HepG2 (cell line): ENCODE measurements at regions of chr1 and their contacts with region 1.

Region 1: GRCh38 chr1:116139592-116140134 is 28.5 kb downstream of the MAB21L3 start:
- DNase-seq: no peak
- ATAC-seq: no peak
- H3K4me3 ChIP-seq: no peak overlapping the region
- H3K27ac ChIP-seq: no peak overlapping the region
- H3K4me1 ChIP-seq: peaks cover 13% of the 10 kb centered on the region
- H3K27me3 ChIP-seq: no peaks in the 10 kb centered on the region
- CTCF ChIP-seq: no peak
- EP300 ChIP-seq: no peak
- POLR2A ChIP-seq: no peak
- RAD21 ChIP-seq: no peak

Region 2: GRCh38 chr1:116168277-116169097 is 28.8 kb after region 1 on chr1:
- CTCF ChIA-PET with region 1: no interaction called
- POLR2A ChIA-PET with region 1: no interaction called
- in situ Hi-C with region 1: no loop called
- intact Hi-C with region 1: no loop called
- DNase-seq: no peak
- ATAC-seq: no peak
- H3K4me3 ChIP-seq: no peak overlapping the region
- H3K27ac ChIP-seq: no peak overlapping the region
- H3K4me1 ChIP-seq: peaks cover 82% of the 10 kb centered on the region
- H3K27me3 ChIP-seq: no peaks in the 10 kb centered on the region
- CTCF ChIP-seq: no peak
- EP300 ChIP-seq: no peak
- POLR2A ChIP-seq: no peak
- RAD21 ChIP-seq: no peak

Region 3: GRCh38 chr1:116189481-116189880 is 49.8 kb after region 1 on chr1:
- CTCF ChIA-PET with region 1: no interaction called
- POLR2A ChIA-PET with region 1: no interaction called
- in situ Hi-C with region 1: no loop called
- intact Hi-C with region 1: no loop called
- DNase-seq: no peak
- ATAC-seq: no peak
- H3K4me3 ChIP-seq: no peak overlapping the region
- H3K27ac ChIP-seq: no peak overlapping the region
- H3K4me1 ChIP-seq: peaks cover 10% of the 10 kb centered on the region
- H3K27me3 ChIP-seq: no peaks in the 10 kb centered on the region
- CTCF ChIP-seq: no peak
- EP300 ChIP-seq: no peak
- POLR2A ChIP-seq: no peak
- RAD21 ChIP-seq: no peak

Region 4: GRCh38 chr1:116377541-116378529 is 238.2 kb after region 1 on chr1:
- CTCF ChIA-PET with region 1: interaction called, 6 read pairs
- POLR2A ChIA-PET with region 1: interaction called, 10 read pairs
- in situ Hi-C with region 1: no loop called
- intact Hi-C with region 1: no loop called
- DNase-seq: peak; percentile 79
- ATAC-seq: peak; percentile 21
- H3K4me3 ChIP-seq: peak overlapping the region; percentile 39 to 89 (median 84)
- H3K27ac ChIP-seq: peak overlapping the region; percentile 77
- H3K4me1 ChIP-seq: peaks cover 85% of the 10 kb centered on the region
- H3K27me3 ChIP-seq: peaks cover 0 to 3% of the 10 kb centered on the region in 2 experiments; a peak in 1 of 5 replicates
- CTCF ChIP-seq: no peak
- EP300 ChIP-seq: peak in 1 of 2 experiments; percentile 60; a peak in 2 of 4 replicates
- POLR2A ChIP-seq: peak in 1 of 2 experiments; percentile 41; a peak in 1 of 4 replicates
- RAD21 ChIP-seq: no peak

Region 5: DNA sequence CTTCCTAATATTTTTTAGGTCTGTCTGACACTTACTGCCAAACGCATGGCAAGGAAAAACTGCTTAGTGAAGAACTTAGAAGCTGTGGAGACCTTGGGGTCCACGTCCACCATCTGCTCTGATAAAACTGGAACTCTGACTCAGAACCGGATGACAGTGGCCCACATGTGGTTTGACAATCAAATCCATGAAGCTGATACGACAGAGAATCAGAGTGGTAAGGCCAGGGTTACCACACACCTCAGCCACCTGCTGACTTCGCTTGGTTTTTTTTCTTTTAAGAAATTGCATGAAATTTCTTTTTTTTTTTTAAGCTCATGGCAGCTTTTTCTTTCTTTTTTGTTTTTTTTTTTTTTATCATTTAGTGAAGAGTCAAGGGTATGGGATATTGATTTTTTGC is 250.5 kb after region 1 on chr1:
- CTCF ChIA-PET with region 1: no interaction called
- POLR2A ChIA-PET with region 1: no interaction called
- in situ Hi-C with region 1: no loop called
- intact Hi-C with region 1: loop called (anchors 5 kb)
- DNase-seq: no peak
- ATAC-seq: no peak
- H3K4me3 ChIP-seq: no peak overlapping the region
- H3K27ac ChIP-seq: no peak overlapping the region
- H3K4me1 ChIP-seq: peaks cover 37% of the 10 kb centered on the region
- H3K27me3 ChIP-seq: no peaks in the 10 kb centered on the region
- CTCF ChIP-seq: no peak
- EP300 ChIP-seq: no peak
- POLR2A ChIP-seq: no peak
- RAD21 ChIP-seq: no peak

Region 6: DNA sequence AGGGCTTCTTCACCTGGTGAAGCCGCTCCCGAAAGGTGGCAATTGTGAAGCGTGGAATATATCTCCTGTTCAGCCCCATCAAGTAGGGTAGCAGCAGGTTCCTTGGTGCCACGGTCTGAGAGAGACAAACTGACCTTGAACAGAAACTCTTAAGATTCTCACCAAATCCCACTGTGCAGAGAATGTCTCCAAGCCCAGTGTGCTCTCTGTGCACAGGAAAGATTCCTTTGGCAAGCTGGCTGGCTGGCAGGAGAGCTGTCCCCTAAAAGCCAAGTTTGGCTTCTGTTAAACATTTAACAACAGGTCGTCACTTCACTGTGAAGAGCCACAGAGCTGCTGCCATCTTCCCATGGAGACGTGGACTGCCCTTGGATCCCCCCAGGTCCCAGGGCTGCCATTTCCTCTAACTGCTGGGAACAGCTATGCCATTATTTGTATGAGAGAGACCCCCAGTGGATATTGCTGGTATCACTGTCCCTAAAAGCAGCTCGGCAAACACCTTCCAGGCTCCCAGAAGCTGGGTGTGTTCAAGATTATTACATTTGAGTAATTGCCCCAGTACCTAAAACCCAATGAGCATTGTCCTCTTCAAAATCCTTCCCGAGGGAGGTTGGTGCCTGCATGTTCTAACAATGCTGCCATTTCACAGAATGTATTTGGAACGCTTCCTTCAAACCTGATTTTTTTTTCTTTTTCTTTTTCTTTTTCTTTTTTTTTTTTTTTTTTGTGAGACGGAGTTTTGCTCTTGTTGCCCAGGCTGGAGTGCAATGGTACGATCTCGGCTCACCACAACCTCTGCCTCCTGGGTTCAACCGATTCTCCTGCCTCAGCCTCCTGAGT is 359.3 kb after region 1 on chr1:
- CTCF ChIA-PET with region 1: interaction called, 81 read pairs
- POLR2A ChIA-PET with region 1: interaction called, 10 read pairs
- in situ Hi-C with region 1: no loop called
- intact Hi-C with region 1: loop called (anchors 1 kb)
- DNase-seq: peak; percentile 68
- ATAC-seq: peak; percentile 66
- H3K4me3 ChIP-seq: no peak overlapping the region
- H3K27ac ChIP-seq: peak overlapping the region; percentile 16
- H3K4me1 ChIP-seq: peaks cover 61% of the 10 kb centered on the region
- H3K27me3 ChIP-seq: no peaks in the 10 kb centered on the region
- CTCF ChIP-seq: peak; percentile 88
- EP300 ChIP-seq: no peak
- POLR2A ChIP-seq: no peak
- RAD21 ChIP-seq: peak; percentile 94